AG04450 (cell line): ENCODE measurements at regions of chr1 and their contacts with region 1.

Region 1: GRCh38 chr1:1374929-1375662 is at the start of gene AURKAIP1:
- DNase-seq: peak; percentile 100
- H3K4me3 ChIP-seq: peak within 1 kb of the TSS; percentile 83
- H3K27ac ChIP-seq: peak within 1 kb of the TSS; percentile 85
- H3K27me3 ChIP-seq: no peaks in the 10 kb centered on the region
- CTCF ChIP-seq: peak; percentile 47
- polyA plus RNA-seq, gene AURKAIP1: 54.3 and 71.2 TPM in 2 replicates

Region 2: GRCh38 chr1:1206376-1207260 is 168.5 kb before region 1 on chr1 and contains the start of gene TNFRSF18:
- CTCF ChIA-PET with region 1: no interaction called
- POLR2A ChIA-PET with region 1: no interaction called
- DNase-seq: no peak
- H3K4me3 ChIP-seq: peak within 1 kb of the TSS; percentile 20; the same call in 1 of the 2 replicates
- H3K27ac ChIP-seq: no peak within 1 kb of the TSS
- H3K27me3 ChIP-seq: peaks cover 9% of the 10 kb centered on the region
- CTCF ChIP-seq: no peak
- polyA plus RNA-seq, gene TNFRSF18: 1.0 and 2.1 TPM in 2 replicates

Region 3: DNA sequence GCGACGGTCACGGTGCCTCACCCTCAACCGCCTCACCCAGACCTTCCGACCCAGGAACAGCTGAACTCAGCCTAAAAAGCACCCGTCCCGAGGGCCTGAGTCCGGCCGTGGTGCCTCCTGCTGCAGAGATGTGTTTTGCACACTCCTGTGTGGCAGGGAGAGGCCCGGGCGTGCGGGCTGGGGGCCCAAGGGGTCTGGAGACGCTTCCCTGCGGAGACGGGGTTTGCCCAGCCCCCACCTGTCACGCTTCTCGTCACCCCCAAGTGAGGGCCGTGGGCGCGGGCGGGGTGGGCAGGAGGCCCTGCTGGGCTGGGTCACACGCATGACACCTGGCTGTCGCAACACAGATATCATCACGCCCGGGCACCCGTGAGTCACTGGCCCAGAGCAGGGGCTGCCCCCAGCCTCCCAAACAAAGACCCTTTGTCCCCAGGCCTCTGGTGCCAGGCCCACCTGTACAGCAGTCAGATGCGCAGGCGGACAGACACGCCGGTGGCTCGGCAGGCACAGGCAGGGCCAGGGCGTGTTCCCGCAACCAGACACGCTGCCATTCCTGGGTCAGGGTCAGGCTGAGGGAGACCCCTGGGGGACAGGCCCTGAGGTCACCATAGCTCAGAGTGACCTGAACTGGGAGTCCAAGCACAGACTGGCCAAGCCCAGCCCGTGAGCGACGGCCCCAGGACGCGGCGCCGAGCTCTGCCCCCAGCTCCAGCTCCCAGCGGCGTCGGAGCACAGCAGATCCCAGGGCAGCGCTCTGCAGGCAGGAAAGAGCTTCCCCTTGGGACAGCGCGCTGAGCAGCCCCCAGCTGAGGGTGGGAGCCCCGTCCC is 137.0 kb before region 1 on chr1:
- CTCF ChIA-PET with region 1: no interaction called
- POLR2A ChIA-PET with region 1: no interaction called
- DNase-seq: no peak
- H3K4me3 ChIP-seq: no peak overlapping the region
- H3K27ac ChIP-seq: no peak overlapping the region
- H3K27me3 ChIP-seq: no peaks in the 10 kb centered on the region
- CTCF ChIP-seq: no peak

Region 4: GRCh38 chr1:1348420-1349255 is 26.5 kb before region 1 on chr1:
- CTCF ChIA-PET with region 1: interaction called, 6 read pairs
- POLR2A ChIA-PET with region 1: interaction called, 12 read pairs
- DNase-seq: no peak
- H3K4me3 ChIP-seq: peak overlapping the region; percentile 74
- H3K27ac ChIP-seq: no peak overlapping the region
- H3K27me3 ChIP-seq: no peaks in the 10 kb centered on the region
- CTCF ChIP-seq: no peak

Region 5: DNA sequence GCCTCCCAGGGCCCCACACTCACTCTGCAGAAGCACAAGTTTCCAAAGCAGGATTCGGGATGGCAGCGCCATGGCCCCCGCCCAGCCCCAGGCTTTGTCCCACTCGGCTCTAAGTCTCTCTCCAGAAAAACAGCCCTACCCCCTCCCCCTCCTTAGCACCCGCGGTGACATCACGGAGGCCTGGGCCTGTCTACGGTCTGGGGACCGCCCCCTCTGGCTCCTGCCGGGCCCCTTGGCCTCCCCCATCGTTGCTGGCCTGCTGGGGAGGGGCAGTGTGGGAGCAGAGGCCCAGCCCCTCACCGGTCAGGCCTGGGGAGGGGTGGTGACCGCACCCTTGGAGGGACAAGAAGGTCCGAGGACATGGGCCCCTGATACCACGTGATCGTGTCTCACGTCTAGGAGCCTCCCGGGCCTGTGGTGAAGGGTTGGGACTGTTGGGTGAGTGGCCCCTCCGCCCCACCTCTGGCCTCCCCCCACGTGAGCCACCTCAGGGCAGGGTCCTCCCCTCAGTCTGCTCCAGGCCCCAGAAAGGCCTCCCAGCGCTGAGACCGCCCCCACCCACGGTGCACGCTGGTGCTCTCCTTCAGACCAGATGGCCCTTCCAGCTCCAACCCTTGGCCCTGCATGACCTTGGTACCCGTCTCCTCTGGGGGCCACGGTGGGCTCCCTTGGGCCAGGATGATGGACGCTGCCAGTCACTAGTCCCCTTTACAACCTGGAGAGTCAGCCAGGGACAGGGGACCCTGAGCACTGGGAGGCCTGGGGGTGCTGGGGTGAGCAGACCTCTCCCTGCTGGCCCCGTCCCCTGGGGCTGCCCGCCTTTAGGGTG is 16.4 kb before region 1 on chr1 and contains the start of gene MXRA8:
- CTCF ChIA-PET with region 1: interaction called, 10 read pairs
- POLR2A ChIA-PET with region 1: interaction called, 16 read pairs
- DNase-seq: peak; percentile 58
- H3K4me3 ChIP-seq: peak within 1 kb of the TSS; percentile 84
- H3K27ac ChIP-seq: peak within 1 kb of the TSS; percentile 99
- H3K27me3 ChIP-seq: no peaks in the 10 kb centered on the region
- CTCF ChIP-seq: no peak
- polyA plus RNA-seq, gene MXRA8: 186 and 275 TPM in 2 replicates

Region 6: GRCh38 chr1:1399187-1399871 is 24.2 kb after region 1 on chr1 and contains the start of gene CCNL2:
- CTCF ChIA-PET with region 1: interaction called, 7 read pairs
- POLR2A ChIA-PET with region 1: interaction called, 15 read pairs
- DNase-seq: peak; percentile 97
- H3K4me3 ChIP-seq: peak within 1 kb of the TSS; percentile 98
- H3K27ac ChIP-seq: peak within 1 kb of the TSS; percentile 65
- H3K27me3 ChIP-seq: no peaks in the 10 kb centered on the region
- CTCF ChIP-seq: peak; percentile 64
- polyA plus RNA-seq, gene CCNL2: 169 and 181 TPM in 2 replicates

Region 7: DNA sequence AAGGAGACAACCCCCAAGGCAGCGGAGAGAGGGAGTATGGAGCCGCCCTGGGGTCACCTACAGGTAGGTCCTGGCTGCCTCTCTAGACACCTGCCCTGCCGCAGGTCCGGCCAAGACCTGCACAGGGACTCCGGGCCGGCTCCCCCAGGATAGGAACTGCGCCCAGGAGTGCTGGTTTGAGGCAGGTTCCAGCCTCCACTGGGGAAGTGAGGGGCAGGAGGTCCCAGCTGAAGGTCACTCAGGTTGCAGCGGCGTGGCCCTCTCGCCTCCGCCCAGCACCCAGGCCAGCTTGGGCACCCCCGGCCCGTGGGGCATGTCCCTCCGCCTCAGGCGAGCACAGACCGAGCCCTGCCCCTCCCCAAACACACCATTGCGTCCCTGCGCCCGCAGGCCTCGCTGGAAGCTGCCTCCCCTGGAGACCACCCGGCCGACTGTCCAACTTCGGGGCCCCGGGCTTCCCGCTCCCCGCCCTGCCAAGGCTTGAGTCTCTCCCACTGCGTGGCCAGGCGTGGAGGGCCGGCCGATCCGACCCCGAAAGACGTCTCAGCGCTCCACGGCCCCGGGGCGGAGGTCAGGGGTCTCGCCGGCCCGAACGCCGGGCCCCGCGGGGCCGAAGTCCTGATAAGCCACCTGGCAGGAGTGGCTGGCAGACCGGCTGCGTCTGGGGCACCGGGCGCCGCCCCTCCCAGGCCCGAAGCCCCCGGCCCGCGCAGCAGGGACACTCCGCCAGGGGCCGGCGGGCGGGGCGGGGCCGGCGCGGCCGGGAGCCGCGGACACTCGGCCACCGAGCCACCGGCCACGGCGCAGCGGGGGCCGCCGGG is 851.6 kb after region 1 on chr1:
- CTCF ChIA-PET with region 1: no interaction called
- POLR2A ChIA-PET with region 1: no interaction called
- DNase-seq: no peak
- H3K4me3 ChIP-seq: peak overlapping the region; percentile 82
- H3K27ac ChIP-seq: no peak overlapping the region
- H3K27me3 ChIP-seq: no peaks in the 10 kb centered on the region
- CTCF ChIP-seq: no peak